Adrenal gland (tissue), 19 donors: ENCODE measurements at regions of chr3 and their contacts with region 1.

Region 1: DNA sequence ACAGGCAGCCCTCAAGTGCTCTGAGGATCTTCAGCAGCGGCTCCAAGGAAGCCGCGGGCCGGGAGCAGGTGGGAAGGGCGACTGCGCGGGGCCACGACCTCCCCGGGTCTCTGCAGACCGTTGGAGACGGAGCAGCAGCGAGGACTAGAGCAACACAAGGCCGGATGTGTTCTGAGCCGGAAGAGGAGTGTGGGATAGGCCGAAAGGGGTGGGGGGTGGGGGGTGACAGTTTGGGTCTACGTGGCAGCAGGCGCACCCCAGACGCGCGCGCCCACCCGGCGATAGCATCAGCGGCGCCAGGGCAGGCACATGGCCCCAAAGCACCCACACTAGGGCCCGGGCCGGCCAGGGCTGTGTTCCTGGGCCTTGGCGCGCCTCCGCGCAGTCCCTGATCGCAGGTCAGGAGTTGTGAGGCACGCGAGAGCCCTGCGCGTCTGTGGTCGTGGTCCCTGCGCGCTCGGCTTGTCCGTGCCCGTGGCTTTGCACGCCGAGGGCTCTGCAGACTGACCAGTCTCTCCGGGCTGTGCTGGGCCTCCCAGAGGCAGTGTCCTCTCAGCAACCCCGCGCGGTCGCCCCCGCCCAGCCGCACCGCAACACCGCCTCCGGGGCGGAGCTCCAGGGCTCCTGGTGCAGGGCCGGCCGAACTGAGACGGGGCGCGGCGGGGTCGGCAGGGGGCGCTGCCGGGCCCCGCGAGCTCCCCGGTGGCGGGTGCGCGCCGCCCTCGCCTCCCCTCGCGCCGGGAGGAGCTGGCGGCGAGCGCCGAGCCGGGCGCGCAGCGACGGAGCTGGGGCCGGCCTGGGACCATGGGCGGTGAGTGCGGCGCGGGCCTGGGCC is at the start of gene PXYLP1:
- DNase-seq: peak; percentile 93 to 97 (median 94)
- H3K4me3 ChIP-seq: peak within 1 kb of the TSS; percentile 33 to 79 (median 59)
- H3K27ac ChIP-seq: peak within 1 kb of the TSS in 4 of 5 donors; percentile 45 to 91 (median 70)
- H3K4me1 ChIP-seq: peaks cover 0 to 13% of the 10 kb centered on the region in 2 donors
- H3K27me3 ChIP-seq: no peaks in the 10 kb centered on the region
- CTCF ChIP-seq: peak in 4 of 6 experiments; percentile 16 to 93 (median 80)
- POLR2A ChIP-seq: peak; percentile 69 to 87
- total RNA-seq, gene PXYLP1: 5.5 to 22.7 (median 9.1) TPM

Region 2: DNA sequence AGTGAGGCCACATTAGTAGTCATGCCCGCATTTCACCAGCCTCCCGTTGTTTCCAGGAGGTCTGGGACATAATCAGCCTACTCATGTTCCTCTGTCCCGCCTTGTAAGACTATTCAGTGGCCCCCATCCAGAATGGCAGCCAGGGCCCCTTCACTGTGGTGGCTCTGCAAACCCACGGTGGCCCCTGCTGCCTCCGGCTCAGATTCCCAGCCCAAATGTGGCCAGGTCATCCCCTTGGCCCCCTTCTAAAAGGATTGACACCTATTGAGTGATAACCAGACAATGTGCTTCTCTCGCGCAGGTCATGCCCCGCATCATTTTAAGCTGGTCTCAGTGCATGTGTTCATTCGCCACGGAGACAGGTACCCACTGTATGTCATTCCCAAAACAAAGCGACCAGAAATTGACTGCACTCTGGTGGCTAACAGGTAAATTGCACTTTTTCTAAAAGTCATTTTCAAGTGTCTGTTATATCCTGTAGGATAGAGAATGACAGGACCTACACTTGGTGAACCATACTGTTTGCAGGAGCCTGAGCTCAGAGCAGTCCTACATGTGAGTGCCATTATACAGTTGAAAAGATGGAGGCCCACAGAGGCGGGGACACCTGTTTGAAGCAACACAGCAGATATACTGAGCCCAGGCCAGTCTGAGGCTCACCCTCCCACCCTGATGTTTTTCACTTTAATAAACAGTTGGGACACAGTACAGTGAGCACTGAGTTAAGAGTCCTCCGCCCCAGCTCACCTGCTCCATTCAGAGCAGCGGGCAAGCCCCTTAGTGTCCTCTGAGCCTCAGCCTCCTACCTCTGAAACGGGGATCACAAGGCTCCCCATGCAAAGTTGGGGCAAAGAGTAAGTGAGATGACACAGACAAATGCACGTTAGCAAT is 48.0 kb after region 1 on chr3:
- intact Hi-C with region 1: loop called (anchors 5 kb)
- DNase-seq: peak in 2 of 7 donors; percentile 21 to 57
- H3K4me3 ChIP-seq: no peak overlapping the region
- H3K27ac ChIP-seq: no peak overlapping the region
- H3K4me1 ChIP-seq: peaks cover 0 to 4% of the 10 kb centered on the region in 2 donors
- H3K27me3 ChIP-seq: no peaks in the 10 kb centered on the region
- CTCF ChIP-seq: peak; percentile 57 to 74 (median 63)
- POLR2A ChIP-seq: no peak